ENCODE measurements at regions of chr18 and their contacts with region 1.

Region 1: GRCh38 chr18:63969960-63970802 is at the start of gene SERPINB8:
- DNase-seq: peak; percentile 77
- ATAC-seq: peak; percentile 84
- H3K4me3 ChIP-seq: peak within 1 kb of the TSS; percentile 57 to 98 (median 81)
- H3K4me3 Mint-ChIP-seq: peak within 1 kb of the TSS; percentile 93
- H3K27ac ChIP-seq: peak within 1 kb of the TSS; percentile 91 to 95
- H3K27ac Mint-ChIP-seq: peak within 1 kb of the TSS; percentile 96
- H3K4me1 ChIP-seq: peaks cover 28 to 33% of the 10 kb centered on the region in 2 donors
- H3K4me1 Mint-ChIP-seq: peaks cover 51% of the 10 kb centered on the region
- H3K27me3 ChIP-seq: no peaks in the 10 kb centered on the region
- H3K27me3 Mint-ChIP-seq: no peaks in the 10 kb centered on the region
- CTCF ChIP-seq: no peak
- total RNA-seq, gene SERPINB8: 22.1 and 26.2 TPM in 2 replicates

Region 2: DNA sequence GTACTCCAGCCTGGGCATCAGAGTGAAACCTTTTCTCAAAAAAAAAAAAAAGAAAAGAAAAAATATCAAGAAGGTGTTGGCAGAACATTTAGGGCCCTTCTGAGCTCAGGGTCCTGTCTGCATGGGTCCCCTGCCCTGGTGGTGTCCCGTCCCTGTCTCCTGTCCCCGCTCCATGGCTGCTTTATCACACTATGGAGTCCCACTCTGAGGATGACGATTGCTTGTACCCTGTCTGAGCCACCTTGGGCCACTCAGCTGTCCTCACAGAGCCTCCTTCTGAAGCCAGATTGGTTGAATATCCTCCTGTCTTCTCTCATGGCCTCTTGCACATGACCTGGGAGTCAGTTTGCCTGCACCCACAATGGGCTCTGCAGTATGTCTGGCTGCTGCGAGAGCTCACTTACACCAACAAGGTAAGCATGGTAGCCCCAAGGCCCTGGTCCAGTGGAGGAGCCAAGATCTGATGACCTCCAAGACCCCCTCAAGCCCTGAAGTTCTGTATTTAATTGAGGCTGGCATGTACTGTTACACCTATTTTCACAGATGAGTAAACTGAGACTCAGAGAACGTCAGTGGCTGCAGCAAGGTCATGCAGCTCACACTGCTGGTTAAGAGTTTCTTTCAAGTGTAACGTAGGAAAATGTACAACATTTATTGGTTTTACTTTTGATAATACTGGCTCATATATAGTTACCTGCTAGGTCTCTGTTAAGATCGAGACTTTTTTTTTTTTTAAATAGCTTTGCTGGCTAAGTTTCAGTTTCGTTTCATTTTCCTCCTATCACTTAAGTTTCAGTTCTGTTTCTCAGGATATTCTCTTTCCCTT is 1464.3 kb before region 1 on chr18:
- CTCF ChIA-PET with region 1: no interaction called
- POLR2A ChIA-PET with region 1: no interaction called
- intact Hi-C with region 1: loop called (anchors 10 kb)
- DNase-seq: peak; percentile 78
- ATAC-seq: peak; percentile 84
- H3K4me3 ChIP-seq: peak overlapping the region; percentile 27 to 58 (median 56)
- H3K4me3 Mint-ChIP-seq: peak overlapping the region; percentile 79
- H3K27ac ChIP-seq: peak overlapping the region; percentile 61 to 72
- H3K27ac Mint-ChIP-seq: peak overlapping the region; percentile 95
- H3K4me1 ChIP-seq: peaks cover 15 to 16% of the 10 kb centered on the region in 2 donors
- H3K4me1 Mint-ChIP-seq: peaks cover 13% of the 10 kb centered on the region
- H3K27me3 ChIP-seq: no peaks in the 10 kb centered on the region
- H3K27me3 Mint-ChIP-seq: no peaks in the 10 kb centered on the region
- CTCF ChIP-seq: no peak

Region 3: DNA sequence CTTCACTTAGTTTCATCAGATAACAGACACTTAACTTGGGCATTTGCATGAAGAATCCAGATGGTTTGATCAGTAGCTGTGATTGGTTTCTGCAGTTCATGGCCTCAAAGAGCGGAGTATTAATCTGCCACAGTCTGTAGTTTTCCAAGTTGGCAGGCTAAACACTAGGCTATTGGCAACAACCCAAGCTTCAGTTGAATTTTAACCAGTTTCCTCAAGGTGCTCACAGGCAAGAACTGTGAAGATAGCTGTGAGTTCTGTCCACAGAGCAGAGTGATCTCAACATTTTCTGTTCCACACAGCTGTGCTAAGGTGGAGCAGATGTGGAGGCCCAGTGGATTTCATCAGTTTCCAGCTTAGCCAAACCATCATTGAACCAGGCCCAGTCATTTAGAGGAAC is 648.2 kb after region 1 on chr18:
- CTCF ChIA-PET with region 1: no interaction called
- POLR2A ChIA-PET with region 1: no interaction called
- intact Hi-C with region 1: no loop called
- DNase-seq: no peak
- ATAC-seq: no peak
- H3K4me3 ChIP-seq: no peak overlapping the region
- H3K4me3 Mint-ChIP-seq: no peak overlapping the region
- H3K27ac ChIP-seq: no peak overlapping the region
- H3K27ac Mint-ChIP-seq: no peak overlapping the region
- H3K4me1 ChIP-seq: no peaks in the 10 kb centered on the region
- H3K4me1 Mint-ChIP-seq: no peaks in the 10 kb centered on the region
- H3K27me3 ChIP-seq: no peaks in the 10 kb centered on the region
- H3K27me3 Mint-ChIP-seq: no peaks in the 10 kb centered on the region
- CTCF ChIP-seq: no peak

Measured in B cell (primary cell).